ENCODE measurements at regions of chr1 and their contacts with region 1.

Region 1: GRCh38 chr1:109773146-109773899 is 9.6 kb upstream of the EPS8L3 start:
- DNase-seq: peak; percentile 85
- ATAC-seq: peak; percentile 90
- H3K4me3 Mint-ChIP-seq: no peak overlapping the region
- H3K27ac Mint-ChIP-seq: no peak overlapping the region
- H3K4me1 Mint-ChIP-seq: peaks cover 27% of the 10 kb centered on the region
- H3K27me3 Mint-ChIP-seq: peaks cover 10% of the 10 kb centered on the region

Region 2: GRCh38 chr1:109213785-109214468 is 559.4 kb before region 1 on chr1 and contains the start of gene SARS1:
- CTCF ChIA-PET with region 1: no interaction called
- POLR2A ChIA-PET with region 1: no interaction called
- DNase-seq: peak; percentile 89
- ATAC-seq: peak; percentile 91
- H3K4me3 Mint-ChIP-seq: peak within 1 kb of the TSS; percentile 99
- H3K27ac Mint-ChIP-seq: peak within 1 kb of the TSS; percentile 85
- H3K4me1 Mint-ChIP-seq: peaks cover 33% of the 10 kb centered on the region
- H3K27me3 Mint-ChIP-seq: peaks cover 3% of the 10 kb centered on the region
- total RNA-seq, gene SARS1: 145 to 157 TPM

Region 3: DNA sequence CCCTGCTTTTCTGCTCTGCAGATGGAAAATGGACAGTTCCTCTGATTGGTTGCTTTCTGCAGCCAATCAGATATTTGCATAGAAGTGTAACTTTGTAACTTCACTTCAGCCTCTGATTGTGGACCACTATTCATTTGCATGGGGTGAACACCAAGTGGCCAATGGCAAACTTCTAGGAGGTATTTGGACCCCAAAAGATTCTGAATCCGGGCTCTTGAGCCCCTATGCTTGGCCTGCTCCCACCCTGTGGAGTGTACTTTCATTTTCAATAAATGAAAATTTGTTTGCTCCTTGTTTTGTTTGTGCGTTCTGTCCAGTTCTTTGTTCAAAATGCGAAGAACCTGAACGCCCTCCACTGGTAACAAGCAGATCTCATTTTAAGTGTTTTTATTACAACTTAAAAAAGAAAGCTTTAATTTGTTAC is 123.8 kb before region 1 on chr1:
- CTCF ChIA-PET with region 1: interaction called, 340 read pairs
- POLR2A ChIA-PET with region 1: no interaction called
- DNase-seq: no peak
- ATAC-seq: no peak
- H3K4me3 Mint-ChIP-seq: no peak overlapping the region
- H3K27ac Mint-ChIP-seq: no peak overlapping the region
- H3K4me1 Mint-ChIP-seq: no peaks in the 10 kb centered on the region
- H3K27me3 Mint-ChIP-seq: peaks cover 32% of the 10 kb centered on the region

Region 4: DNA sequence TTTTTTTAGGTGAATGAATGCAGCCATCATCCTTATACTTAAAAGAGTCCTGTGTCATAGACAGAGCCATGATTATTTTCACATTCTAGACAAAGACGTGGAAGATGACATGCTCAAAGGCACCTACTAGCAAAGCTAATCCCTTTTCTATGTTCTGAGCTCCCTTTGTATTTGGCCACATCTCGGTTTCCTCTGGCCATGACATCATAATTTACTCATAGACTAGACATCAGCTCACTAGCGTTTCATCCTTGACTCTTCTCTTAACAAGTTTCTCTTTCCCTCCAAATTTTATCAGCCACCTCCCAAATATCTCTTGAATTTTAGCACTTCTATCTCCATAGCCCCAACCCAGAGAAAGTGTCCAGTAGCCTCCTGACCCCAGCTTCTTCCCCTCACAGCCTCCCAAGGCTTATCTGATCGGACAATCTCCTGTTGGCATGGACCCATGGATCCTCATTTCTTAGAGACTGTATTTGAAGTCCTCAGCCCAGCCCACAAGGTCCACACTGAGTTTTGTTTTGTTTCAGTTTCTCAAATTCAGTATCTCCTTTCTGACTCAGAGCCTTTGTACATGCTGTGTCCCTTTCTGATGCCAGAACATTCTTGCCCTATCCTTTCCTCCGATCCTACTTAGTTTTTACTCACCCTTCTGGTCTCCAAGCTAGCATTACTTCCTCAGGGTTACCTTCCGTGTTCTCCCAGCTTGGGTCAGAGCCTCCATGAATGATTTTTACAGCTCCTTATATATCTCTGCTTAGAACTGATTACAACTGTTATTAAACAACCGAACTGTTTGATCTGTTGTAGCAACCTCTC is 23.4 kb after region 1 on chr1:
- CTCF ChIA-PET with region 1: interaction called, 172 read pairs
- POLR2A ChIA-PET with region 1: no interaction called
- DNase-seq: peak; percentile 51
- ATAC-seq: peak; percentile 59
- H3K4me3 Mint-ChIP-seq: peak overlapping the region; percentile 2
- H3K27ac Mint-ChIP-seq: peak overlapping the region; percentile 90
- H3K4me1 Mint-ChIP-seq: peaks cover 90% of the 10 kb centered on the region
- H3K27me3 Mint-ChIP-seq: no peaks in the 10 kb centered on the region

Region 5: DNA sequence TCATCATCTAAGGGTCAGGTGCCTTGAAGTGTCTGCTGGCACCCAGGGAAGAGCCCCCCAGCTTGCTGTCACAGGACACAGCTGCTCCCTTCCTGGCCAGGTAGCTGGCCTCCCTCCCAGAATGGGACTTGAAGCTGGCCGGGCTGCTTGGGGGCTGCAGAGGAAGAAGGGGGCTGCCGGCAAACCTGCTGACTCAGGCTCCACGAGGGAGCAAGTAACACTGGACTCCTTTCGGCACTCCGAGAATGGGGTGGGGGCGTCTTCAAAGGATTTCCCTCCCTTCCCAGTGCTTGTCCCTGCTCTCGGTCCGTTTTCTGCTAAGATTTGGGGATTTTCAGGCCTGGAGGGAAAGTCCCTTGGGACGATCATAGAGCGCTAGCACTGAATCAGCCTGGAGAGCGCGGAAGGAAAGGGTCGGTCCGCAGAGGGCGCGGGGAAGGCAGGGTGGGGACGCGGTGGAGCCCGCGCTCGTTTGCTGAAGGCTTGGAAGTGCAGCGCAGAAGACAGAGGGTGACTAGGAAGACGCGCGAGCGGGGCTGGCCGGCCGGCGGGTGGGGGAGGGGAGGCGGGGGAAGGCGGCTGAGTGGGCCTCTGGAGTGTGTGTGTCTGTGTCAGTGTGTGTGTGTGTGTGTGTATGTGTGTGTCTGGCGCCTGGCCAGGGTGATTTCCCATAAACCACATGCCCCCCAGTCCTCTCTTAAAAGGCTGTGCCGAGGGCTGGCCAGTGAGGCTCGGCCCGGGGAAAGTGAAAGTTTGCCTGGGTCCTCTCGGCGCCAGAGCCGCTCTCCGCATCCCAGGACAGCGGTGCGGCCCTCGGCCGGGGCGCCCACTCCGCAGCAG is 137.0 kb after region 1 on chr1 and contains the start of gene CSF1:
- CTCF ChIA-PET with region 1: interaction called, 12 read pairs
- POLR2A ChIA-PET with region 1: interaction called, 3 read pairs
- DNase-seq: peak; percentile 79
- ATAC-seq: peak; percentile 54
- H3K4me3 Mint-ChIP-seq: peak within 1 kb of the TSS; percentile 92
- H3K27ac Mint-ChIP-seq: peak within 1 kb of the TSS; percentile 95
- H3K4me1 Mint-ChIP-seq: peaks cover 83% of the 10 kb centered on the region
- H3K27me3 Mint-ChIP-seq: no peaks in the 10 kb centered on the region
- total RNA-seq, gene CSF1: 40.3 to 41.1 TPM

Region 6: GRCh38 chr1:109969146-109969829 is 196.0 kb after region 1 on chr1:
- CTCF ChIA-PET with region 1: interaction called, 11 read pairs
- POLR2A ChIA-PET with region 1: no interaction called
- DNase-seq: no peak
- ATAC-seq: no peak
- H3K4me3 Mint-ChIP-seq: no peak overlapping the region
- H3K27ac Mint-ChIP-seq: no peak overlapping the region
- H3K4me1 Mint-ChIP-seq: no peaks in the 10 kb centered on the region
- H3K27me3 Mint-ChIP-seq: peaks cover 47% of the 10 kb centered on the region

Region 7: DNA sequence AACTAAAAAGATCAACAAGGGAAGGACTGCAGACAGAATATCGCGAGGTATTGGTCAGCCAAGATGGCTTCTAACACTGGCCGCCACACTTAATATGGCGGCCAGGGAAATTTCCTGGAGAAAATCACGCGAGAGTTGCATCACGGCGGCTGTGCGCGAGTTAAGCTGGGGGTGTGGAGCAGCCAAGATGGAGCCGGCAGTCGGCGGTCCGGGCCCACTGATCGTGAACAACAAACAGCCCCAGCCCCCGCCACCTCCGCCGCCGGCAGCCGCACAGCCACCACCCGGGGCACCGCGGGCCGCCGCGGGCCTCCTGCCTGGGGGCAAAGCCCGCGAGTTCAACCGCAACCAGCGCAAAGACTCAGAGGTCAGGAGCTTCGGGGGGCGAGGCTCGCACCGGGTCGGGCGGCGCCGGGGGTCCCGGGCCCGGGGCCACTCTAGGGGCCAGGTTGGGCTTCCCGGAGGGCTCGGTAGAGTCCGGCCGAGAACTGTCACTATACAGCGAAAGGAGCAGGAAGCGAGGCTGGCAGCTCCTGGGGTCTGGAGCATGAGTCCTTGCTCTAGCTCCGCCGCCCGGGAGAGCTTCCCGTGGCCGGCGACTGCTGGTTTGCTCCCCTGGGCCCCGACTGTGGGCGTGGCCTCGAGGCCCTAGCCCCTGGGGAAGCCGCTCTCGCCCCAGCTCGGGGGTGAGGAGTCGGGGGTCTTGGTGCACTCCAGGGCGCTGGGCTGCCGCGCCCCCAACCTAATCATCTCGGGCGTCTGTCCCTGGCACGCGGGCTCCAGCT is 261.3 kb after region 1 on chr1 and contains the start of gene STRIP1:
- CTCF ChIA-PET with region 1: interaction called, 10 read pairs
- POLR2A ChIA-PET with region 1: no interaction called
- DNase-seq: peak; percentile 96
- ATAC-seq: peak; percentile 92
- H3K4me3 Mint-ChIP-seq: peak within 1 kb of the TSS; percentile 82
- H3K27ac Mint-ChIP-seq: peak within 1 kb of the TSS; percentile 86
- H3K4me1 Mint-ChIP-seq: peaks cover 57% of the 10 kb centered on the region
- H3K27me3 Mint-ChIP-seq: no peaks in the 10 kb centered on the region
- total RNA-seq, gene STRIP1: 33.2 to 35.9 TPM

Region 8: DNA sequence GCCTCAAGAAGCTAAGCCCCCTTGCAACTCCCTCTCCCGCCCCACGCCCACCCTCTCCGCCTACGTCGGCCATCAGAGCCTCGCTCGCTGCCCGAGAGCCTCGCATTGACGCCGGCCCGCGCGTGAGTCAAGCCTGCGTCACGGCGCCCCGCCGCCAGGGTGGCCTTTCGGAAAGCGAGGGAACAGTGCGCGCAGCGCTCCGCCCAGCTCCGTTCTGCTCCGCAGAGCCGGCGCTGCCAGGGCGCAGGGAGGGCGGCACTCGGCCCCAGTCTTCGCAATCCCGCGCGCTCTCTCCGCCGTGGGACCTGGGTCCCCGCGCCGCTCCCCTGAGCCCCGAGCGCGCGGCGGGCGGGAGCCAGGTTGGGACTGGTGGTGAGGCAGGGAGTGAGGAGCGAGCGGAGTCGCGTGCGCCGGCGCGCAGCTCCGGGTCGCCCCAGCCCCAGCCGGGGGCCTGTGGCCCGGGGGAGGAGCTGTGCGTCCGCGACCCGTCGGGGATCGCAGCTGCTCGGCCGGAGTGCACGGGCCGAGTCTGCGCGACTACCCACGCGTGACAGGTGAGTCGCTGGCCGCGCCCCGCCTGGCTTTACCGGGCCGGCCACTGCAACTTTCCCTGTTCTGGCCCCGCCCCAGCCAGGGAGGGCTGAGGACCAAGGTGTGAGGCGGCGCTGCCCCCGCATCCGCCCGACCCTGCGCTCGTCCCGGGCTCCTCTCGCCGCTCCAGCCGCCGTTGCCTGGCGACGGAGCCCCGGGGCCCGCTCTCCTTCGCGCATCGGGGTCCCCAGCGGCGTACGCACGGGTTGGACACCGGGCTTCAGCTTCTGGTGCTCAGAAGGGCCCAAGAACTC is 377.2 kb after region 1 on chr1 and contains the start of gene SLC6A17:
- CTCF ChIA-PET with region 1: no interaction called
- POLR2A ChIA-PET with region 1: no interaction called
- DNase-seq: peak; percentile 25
- ATAC-seq: peak; percentile 76
- H3K4me3 Mint-ChIP-seq: no peak within 1 kb of the TSS
- H3K27ac Mint-ChIP-seq: no peak within 1 kb of the TSS
- H3K4me1 Mint-ChIP-seq: peaks cover 2% of the 10 kb centered on the region
- H3K27me3 Mint-ChIP-seq: peaks cover 40% of the 10 kb centered on the region
- total RNA-seq, gene SLC6A17: not detected